Common myeloid progenitor, CD34-positive (primary cell): ENCODE measurements at regions of chr4 and their contacts with region 1.

Region 1: DNA sequence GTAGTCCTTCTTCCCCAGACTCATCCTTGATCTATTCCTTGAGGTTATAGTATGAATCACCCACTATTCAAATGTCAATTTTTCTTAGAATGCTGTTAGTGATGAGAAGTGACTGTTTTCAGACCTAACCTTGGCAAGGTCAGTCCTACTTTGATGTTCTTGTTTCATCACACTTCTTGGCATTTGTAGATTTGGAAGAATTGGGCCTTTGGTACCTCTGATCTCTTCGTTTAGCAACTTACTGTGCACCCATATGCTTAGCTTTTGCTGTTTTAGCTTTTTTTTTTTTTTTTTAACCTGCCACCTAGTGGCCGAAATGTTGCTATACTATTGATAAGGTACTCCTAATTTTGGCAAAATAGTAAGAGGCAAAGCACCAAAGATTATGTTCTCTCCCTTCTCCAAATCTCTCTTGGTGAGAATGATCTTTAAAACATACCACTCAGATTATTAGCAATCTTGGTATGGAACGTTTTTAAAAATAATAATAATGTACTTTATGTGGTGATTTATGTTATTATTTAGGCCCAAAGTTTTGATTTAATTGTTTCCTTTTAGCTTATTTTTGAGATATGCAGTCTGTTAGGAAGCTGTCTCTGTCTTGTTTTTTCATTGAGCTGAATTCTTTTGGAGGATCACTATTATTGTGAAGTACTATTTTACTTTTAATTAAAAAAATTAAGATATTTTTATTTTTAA is 16.6 kb downstream of the DCK start:
- DNase-seq: peak; percentile 60 to 66 (median 64)
- H3K4me3 ChIP-seq: no peak overlapping the region
- H3K27ac ChIP-seq: no peak overlapping the region
- H3K4me1 ChIP-seq: peaks cover 5 to 23% (median 8%) of the 10 kb centered on the region in 4 experiments
- H3K27me3 ChIP-seq: no peaks in the 10 kb centered on the region

Region 2: DNA sequence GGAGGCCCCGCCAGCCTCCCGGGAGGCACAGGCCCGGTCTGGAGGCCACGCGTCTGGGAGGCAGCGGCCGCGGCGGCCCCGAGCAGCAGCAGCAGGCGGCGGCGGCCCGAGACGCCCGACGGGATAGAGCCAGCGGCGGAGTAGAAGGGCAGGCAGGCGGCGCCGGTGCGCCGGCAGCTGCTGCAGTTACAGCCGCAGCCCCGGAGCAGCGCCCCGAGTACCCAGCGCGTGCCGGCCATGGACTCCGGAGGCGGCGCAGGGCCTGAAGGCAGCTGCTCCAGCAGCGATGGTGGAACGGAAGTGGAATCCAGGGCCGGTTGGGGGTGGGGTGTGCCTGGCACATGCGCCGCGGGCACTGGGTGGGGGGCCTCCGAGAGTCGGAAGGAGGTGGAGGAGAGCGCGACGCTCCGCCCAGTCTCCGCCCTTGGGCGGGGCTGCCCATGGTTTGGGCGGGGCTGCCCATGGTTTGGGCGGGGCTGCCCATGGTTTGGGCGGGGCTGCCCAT is 170.4 kb before region 1 on chr4 and contains the start of gene GRSF1:
- CTCF ChIA-PET with region 1: no interaction called
- POLR2A ChIA-PET with region 1: no interaction called
- DNase-seq: peak; percentile 92 to 95 (median 95)
- H3K4me3 ChIP-seq: peak within 1 kb of the TSS; percentile 81 to 95 (median 87)
- H3K27ac ChIP-seq: peak within 1 kb of the TSS; percentile 58 to 83
- H3K4me1 ChIP-seq: peaks cover 5 to 28% (median 16%) of the 10 kb centered on the region in 4 experiments
- H3K27me3 ChIP-seq: no peaks in the 10 kb centered on the region

Region 3: DNA sequence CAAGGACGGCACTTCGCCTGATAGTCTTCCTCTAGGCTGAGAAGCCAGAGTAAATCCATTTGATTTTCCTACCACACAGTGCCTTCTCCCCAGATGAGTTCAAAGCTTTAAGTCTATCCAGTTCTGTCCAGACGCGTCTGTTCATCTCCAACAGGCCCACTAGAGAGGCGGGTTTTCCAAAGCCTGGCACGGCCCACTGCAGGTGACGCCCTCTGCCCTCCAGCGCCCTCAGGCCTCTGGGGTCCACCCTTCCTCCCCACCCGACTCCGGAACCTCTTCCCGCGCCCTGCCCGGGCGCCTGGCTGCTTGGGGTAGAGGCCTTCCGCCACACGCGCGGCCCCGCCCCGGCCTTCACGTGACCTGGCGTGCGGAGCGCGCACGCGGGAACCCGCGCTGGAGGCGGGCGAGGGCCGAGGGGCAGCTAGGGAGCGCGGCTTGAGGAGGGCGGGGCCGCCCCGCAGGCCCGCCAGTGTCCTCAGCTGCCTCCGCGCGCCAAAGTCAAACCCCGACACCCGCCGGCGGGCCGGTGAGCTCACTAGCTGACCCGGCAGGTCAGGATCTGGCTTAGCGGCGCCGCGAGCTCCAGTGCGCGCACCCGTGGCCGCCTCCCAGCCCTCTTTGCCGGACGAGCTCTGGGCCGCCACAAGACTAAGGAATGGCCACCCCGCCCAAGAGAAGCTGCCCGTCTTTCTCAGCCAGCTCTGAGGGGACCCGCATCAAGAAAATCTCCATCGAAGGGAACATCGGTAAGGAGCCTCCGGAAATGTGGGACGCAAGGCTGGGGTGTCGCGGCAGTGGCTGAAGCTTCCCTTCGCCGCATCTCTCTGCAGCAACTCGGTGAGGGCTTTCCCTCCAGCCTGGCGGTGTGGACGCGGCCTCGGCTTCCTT is 16.6 kb before region 1 on chr4 and contains the start of gene DCK:
- CTCF ChIA-PET with region 1: interaction called, 82 read pairs
- POLR2A ChIA-PET with region 1: no interaction called
- DNase-seq: peak; percentile 91 to 94 (median 92)
- H3K4me3 ChIP-seq: peak within 1 kb of the TSS; percentile 85 to 99 (median 97)
- H3K27ac ChIP-seq: peak within 1 kb of the TSS; percentile 74 to 89
- H3K4me1 ChIP-seq: peaks cover 29 to 52% (median 38%) of the 10 kb centered on the region in 4 experiments
- H3K27me3 ChIP-seq: no peaks in the 10 kb centered on the region